HEK293 (cell line): ENCODE measurements at regions of chr22 and their contacts with region 1.

Region 1: DNA sequence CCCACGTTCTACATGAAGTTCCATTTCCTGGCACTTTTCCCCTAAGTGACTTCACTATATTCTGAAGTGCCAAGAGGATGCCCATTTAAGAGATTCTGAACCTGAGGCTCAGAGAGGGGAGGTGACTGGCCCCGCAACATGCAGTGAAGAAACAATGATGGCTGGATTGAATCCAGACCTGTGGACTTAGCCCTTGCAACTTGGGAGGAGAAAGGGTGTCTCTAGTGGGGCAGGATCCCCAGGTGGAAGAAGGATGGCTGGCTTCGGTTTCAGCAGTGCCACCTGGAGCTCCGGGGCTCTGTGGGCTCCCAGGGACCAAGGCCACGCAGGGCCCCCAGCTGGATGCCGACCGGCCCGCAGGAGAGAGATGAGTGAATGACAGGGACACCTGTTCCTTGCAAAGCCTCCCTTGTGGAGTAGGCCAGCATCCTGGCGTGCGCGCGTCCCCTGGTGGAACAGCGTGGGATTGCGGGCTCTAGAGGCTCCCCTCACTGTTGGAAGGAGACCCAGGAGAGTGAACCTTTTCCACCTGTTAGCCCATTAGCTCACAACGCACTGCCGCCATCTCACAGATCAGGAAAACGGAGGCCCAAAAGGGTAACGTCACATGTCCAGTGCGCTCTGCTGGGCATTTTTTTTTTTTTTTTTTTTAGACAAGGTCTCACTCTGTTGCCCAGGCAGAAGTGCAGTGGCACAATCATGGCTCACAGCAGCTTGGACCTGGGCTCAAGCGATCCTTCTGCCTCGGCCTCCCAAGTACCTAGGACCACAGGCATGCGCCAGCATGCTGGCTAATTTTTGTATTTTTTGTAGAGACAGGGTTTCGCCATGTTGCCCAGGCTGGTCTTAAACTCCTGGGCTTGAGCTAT is 104.7 kb downstream of the KIAA1671 start:
- H3K4me3 ChIP-seq: no peak overlapping the region
- H3K27ac ChIP-seq: no peak overlapping the region
- H3K4me1 ChIP-seq: no peaks in the 10 kb centered on the region
- CTCF ChIP-seq: peak; percentile 92

Region 2: DNA sequence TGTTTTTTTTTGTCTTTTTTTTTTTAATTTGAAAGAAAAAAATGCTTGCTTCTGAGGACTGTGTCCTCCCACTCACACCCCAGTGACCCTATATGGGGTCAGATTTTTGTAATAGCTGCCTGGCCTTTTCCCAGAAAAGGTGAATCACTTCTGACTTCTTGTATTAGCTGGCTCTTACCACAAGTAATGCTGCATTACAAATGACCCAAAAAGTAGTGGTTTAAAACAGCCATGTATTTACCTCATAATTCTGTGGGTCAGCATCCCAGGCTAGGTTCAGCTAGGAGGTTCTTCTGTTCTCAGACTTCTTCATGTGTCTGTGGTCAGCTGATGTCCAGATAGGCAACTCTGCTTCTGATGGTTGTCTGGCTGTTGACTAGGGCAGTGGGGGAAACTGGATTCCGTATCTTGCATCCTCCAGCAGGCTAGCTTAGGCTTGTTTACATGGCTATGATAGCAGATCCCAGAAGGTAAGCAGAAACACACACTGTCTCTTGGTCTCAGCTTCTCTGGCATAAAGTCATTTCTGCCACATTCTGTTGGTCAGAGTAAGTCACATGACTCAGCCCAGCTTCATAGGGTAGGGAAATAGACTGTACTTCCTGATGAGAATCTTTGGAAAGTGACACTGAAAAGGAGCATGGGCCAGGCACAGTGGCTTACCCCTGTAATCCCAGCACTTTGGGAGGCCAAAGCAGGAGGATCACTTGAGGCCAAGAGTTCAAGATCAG is 130.2 kb before region 1 on chr22:
- CTCF ChIA-PET with region 1: interaction called, 10 read pairs
- POLR2A ChIA-PET with region 1: no interaction called
- H3K4me3 ChIP-seq: no peak overlapping the region
- H3K27ac ChIP-seq: no peak overlapping the region
- H3K4me1 ChIP-seq: no peaks in the 10 kb centered on the region
- CTCF ChIP-seq: no peak

Region 3: GRCh38 chr22:24944217-24944937 is 112.9 kb before region 1 on chr22:
- CTCF ChIA-PET with region 1: interaction called, 300 read pairs
- POLR2A ChIA-PET with region 1: no interaction called
- H3K4me3 ChIP-seq: no peak overlapping the region
- H3K27ac ChIP-seq: no peak overlapping the region
- H3K4me1 ChIP-seq: no peaks in the 10 kb centered on the region
- CTCF ChIP-seq: no peak

Region 4: DNA sequence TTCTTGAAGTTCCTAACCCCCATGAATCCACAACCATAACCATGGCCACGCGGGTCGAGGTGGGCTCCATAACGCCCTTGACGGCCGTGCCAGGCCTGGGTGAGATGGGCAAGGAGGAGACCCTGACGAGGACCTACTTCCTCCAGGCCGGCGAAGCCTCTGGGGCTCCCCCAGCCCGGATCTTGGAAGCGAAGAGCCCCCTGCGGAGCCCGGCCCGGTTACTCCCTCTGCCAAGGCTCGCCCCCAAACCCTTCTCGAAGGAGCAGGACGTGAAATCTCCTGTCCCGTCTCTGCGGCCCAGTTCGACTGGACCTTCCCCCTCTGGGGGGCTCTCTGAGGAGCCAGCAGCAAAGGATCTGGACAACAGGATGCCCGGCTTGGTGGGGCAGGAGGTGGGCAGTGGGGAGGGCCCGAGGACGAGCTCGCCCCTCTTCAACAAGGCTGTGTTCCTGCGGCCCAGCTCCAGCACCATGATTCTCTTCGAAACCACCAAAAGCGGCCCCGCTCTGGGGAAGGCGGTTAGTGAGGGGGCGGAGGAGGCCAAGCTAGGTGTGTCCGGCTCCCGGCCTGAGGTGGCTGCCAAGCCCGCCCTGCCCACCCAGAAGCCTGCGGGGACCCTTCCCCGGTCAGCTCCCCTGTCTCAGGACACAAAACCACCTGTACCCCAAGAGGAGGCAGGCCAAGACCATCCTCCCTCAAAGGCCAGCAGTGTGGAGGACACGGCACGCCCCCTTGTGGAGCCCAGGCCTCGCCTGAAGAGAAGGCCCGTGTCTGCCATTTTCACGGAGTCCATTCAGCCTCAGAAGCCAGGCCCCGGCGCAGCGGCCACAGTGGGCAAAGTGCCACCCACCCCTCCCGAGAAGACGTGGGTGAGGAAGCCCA is 29.0 kb before region 1 on chr22:
- CTCF ChIA-PET with region 1: interaction called, 10 read pairs
- POLR2A ChIA-PET with region 1: no interaction called
- H3K4me3 ChIP-seq: no peak overlapping the region
- H3K27ac ChIP-seq: no peak overlapping the region
- H3K4me1 ChIP-seq: peaks cover 2% of the 10 kb centered on the region
- CTCF ChIP-seq: peak; percentile 48

Region 5: GRCh38 chr22:25085930-25086901 is 29.0 kb after region 1 on chr22:
- CTCF ChIA-PET with region 1: no interaction called
- POLR2A ChIA-PET with region 1: no interaction called
- H3K4me3 ChIP-seq: no peak overlapping the region
- H3K27ac ChIP-seq: no peak overlapping the region
- H3K4me1 ChIP-seq: no peaks in the 10 kb centered on the region
- CTCF ChIP-seq: no peak

Region 6: GRCh38 chr22:25219948-25220442 is 162.7 kb after region 1 on chr22:
- CTCF ChIA-PET with region 1: no interaction called
- POLR2A ChIA-PET with region 1: no interaction called
- H3K4me3 ChIP-seq: no peak overlapping the region
- H3K27ac ChIP-seq: no peak overlapping the region
- H3K4me1 ChIP-seq: no peaks in the 10 kb centered on the region
- CTCF ChIP-seq: no peak